ENCODE measurements at regions of chr6 and their contacts with region 1.

Region 1: GRCh38 chr6:110971468-110971867 is 10.4 kb upstream of the RPF2 start:
- DNase-seq: no peak
- ATAC-seq: no peak
- H3K4me3 ChIP-seq: no peak overlapping the region
- H3K4me3 Mint-ChIP-seq: no peak overlapping the region
- H3K27ac ChIP-seq: no peak overlapping the region
- H3K27ac Mint-ChIP-seq: no peak overlapping the region
- H3K4me1 ChIP-seq: no peaks in the 10 kb centered on the region
- H3K4me1 Mint-ChIP-seq: no peaks in the 10 kb centered on the region
- H3K27me3 ChIP-seq: no peaks in the 10 kb centered on the region
- H3K27me3 Mint-ChIP-seq: no peaks in the 10 kb centered on the region

Region 2: DNA sequence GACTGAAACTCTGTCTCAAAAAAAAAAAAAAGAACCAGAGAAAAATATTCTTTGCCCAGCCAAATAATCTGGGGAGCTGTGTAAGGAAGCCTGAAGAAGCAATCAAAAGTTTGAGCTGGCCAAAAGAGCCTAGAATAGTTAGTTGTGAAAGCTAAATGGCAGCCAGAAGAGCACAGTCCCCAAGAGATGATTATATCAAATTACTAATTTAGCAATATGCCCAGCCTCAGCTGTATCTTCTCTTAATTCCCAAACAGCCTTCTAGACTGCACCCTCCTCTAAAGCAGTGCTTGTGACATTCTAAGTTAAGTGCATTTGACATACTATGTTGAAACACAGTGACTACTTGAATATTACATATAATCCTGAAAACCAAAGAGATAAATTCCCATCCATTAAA is 195.1 kb before region 1 on chr6:
- CTCF ChIA-PET with region 1: no interaction called
- POLR2A ChIA-PET with region 1: no interaction called
- DNase-seq: no peak
- ATAC-seq: no peak
- H3K4me3 ChIP-seq: no peak overlapping the region
- H3K4me3 Mint-ChIP-seq: no peak overlapping the region
- H3K27ac ChIP-seq: no peak overlapping the region
- H3K27ac Mint-ChIP-seq: no peak overlapping the region
- H3K4me1 ChIP-seq: peaks cover 0 to 4% of the 10 kb centered on the region in 2 experiments
- H3K4me1 Mint-ChIP-seq: peaks cover 3 to 5% (median 5%) of the 10 kb centered on the region in 3 donors
- H3K27me3 ChIP-seq: no peaks in the 10 kb centered on the region
- H3K27me3 Mint-ChIP-seq: no peaks in the 10 kb centered on the region

Region 3: DNA sequence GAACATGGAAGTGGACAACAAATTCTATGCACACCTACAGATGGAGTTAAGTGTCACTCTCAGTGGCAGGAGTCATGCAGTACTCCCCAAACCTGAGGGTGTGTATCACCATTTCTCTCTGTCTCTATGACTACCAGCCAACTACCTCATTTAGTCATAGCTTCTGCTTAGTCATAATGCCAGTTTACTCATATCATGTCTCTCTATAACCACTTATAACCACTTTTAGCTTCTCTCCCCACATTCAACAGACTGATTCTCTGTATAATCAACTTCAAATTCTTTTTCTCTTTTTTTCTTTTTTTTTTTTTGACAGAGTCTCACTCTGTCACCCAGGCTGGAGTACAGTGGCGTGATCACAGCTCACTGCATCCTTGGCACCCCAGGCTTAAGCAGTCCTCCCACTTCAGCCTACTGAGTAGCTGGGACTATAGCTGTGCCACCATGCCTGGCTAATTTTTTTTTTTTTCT is 26.8 kb before region 1 on chr6:
- CTCF ChIA-PET with region 1: no interaction called
- POLR2A ChIA-PET with region 1: interaction called, 6 to 14 read pairs
- DNase-seq: peak in 2 of 35 experiments; percentile 5 to 26
- ATAC-seq: peak; percentile 70 to 98 (median 92)
- H3K4me3 ChIP-seq: no peak overlapping the region
- H3K4me3 Mint-ChIP-seq: no peak overlapping the region
- H3K27ac ChIP-seq: no peak overlapping the region
- H3K27ac Mint-ChIP-seq: peak overlapping the region; percentile 39 to 66
- H3K4me1 ChIP-seq: no peaks in the 10 kb centered on the region
- H3K4me1 Mint-ChIP-seq: peaks cover 0 to 6% (median 3%) of the 10 kb centered on the region in 3 donors
- H3K27me3 ChIP-seq: no peaks in the 10 kb centered on the region
- H3K27me3 Mint-ChIP-seq: no peaks in the 10 kb centered on the region

Measured in T-cell (primary cell).